ENCODE measurements at regions of chr1 and their contacts with region 1.

Region 1: GRCh38 chr1:117534995-117535467 is 70.8 kb upstream of the TENT5C start:
- DNase-seq: peak; percentile 62
- H3K4me3 Mint-ChIP-seq: no peak overlapping the region
- H3K27ac Mint-ChIP-seq: no peak overlapping the region
- H3K4me1 Mint-ChIP-seq: no peaks in the 10 kb centered on the region
- H3K27me3 Mint-ChIP-seq: no peaks in the 10 kb centered on the region
- CTCF ChIP-seq: peak; percentile 53

Region 2: DNA sequence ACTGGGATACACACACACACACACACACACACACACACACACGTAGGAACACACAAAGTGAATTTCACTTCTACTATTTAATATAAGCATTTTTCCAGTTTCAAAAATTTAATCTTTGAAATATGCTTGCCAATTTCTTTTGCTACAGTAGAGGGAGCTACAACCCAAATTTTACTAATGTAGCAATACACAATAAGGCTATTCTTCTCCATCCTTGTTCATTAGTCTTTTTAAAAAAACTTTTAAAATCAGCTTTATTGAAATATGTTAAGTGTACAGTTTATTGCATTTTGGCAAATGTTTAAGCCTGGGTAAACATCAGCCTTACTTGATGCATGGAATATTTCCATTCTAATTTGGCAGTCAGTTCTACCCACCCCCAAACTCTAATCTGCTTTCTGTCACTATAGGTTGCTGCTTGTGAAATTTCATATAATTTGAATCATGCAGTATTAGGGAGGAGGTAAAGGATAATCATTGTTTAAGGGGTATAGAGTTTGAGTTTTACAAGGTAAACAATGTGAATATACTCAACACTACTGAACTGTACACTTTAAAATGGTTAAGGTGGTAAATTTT is 22.2 kb before region 1 on chr1:
- CTCF ChIA-PET with region 1: interaction called, 22 read pairs
- POLR2A ChIA-PET with region 1: interaction called, 4 read pairs
- intact Hi-C with region 1: no loop called
- DNase-seq: peak; percentile 32
- H3K4me3 Mint-ChIP-seq: no peak overlapping the region
- H3K27ac Mint-ChIP-seq: no peak overlapping the region
- H3K4me1 Mint-ChIP-seq: no peaks in the 10 kb centered on the region
- H3K27me3 Mint-ChIP-seq: no peaks in the 10 kb centered on the region
- CTCF ChIP-seq: peak; percentile 53

Region 3: GRCh38 chr1:117622726-117623125 is 87.7 kb after region 1 on chr1:
- CTCF ChIA-PET with region 1: interaction called, 12 read pairs
- POLR2A ChIA-PET with region 1: no interaction called
- intact Hi-C with region 1: no loop called
- DNase-seq: no peak
- H3K4me3 Mint-ChIP-seq: no peak overlapping the region
- H3K27ac Mint-ChIP-seq: no peak overlapping the region
- H3K4me1 Mint-ChIP-seq: no peaks in the 10 kb centered on the region
- H3K27me3 Mint-ChIP-seq: no peaks in the 10 kb centered on the region
- CTCF ChIP-seq: no peak

Region 4: GRCh38 chr1:117654493-117655219 is 119.6 kb after region 1 on chr1:
- CTCF ChIA-PET with region 1: interaction called, 14 read pairs
- POLR2A ChIA-PET with region 1: no interaction called
- intact Hi-C with region 1: no loop called
- DNase-seq: peak; percentile 55
- H3K4me3 Mint-ChIP-seq: no peak overlapping the region
- H3K27ac Mint-ChIP-seq: peak overlapping the region; percentile 74
- H3K4me1 Mint-ChIP-seq: peaks cover 23% of the 10 kb centered on the region
- H3K27me3 Mint-ChIP-seq: no peaks in the 10 kb centered on the region
- CTCF ChIP-seq: no peak

Region 5: GRCh38 chr1:117674521-117675397 is 139.7 kb after region 1 on chr1:
- CTCF ChIA-PET with region 1: interaction called, 6 read pairs
- POLR2A ChIA-PET with region 1: no interaction called
- intact Hi-C with region 1: loop called (anchors 10 kb)
- DNase-seq: peak; percentile 45
- H3K4me3 Mint-ChIP-seq: no peak overlapping the region
- H3K27ac Mint-ChIP-seq: no peak overlapping the region
- H3K4me1 Mint-ChIP-seq: no peaks in the 10 kb centered on the region
- H3K27me3 Mint-ChIP-seq: peaks cover 10% of the 10 kb centered on the region
- CTCF ChIP-seq: no peak

Region 6: GRCh38 chr1:118077331-118078055 is 542.5 kb after region 1 on chr1:
- CTCF ChIA-PET with region 1: no interaction called
- POLR2A ChIA-PET with region 1: no interaction called
- intact Hi-C with region 1: no loop called
- DNase-seq: peak; percentile 63
- H3K4me3 Mint-ChIP-seq: no peak overlapping the region
- H3K27ac Mint-ChIP-seq: no peak overlapping the region
- H3K4me1 Mint-ChIP-seq: no peaks in the 10 kb centered on the region
- H3K27me3 Mint-ChIP-seq: no peaks in the 10 kb centered on the region
- CTCF ChIP-seq: peak; percentile 65